Activated CD8-positive, alpha-beta T cell treated with anti-CD3 and anti-CD28 coated beads, Interleukin-2, amount 10 ng/mL, durations not matched to agents 7 days and 5 days (primary cell): ENCODE measurements at regions of chr3 and their contacts with region 1.

Region 1: GRCh38 chr3:43162230-43163084 is 56.6 kb upstream of the POMGNT2 start:
- DNase-seq: peak; percentile 79
- ATAC-seq: peak; percentile 93
- H3K4me3 Mint-ChIP-seq: peak overlapping the region; percentile 72
- H3K27ac Mint-ChIP-seq: peak overlapping the region; percentile 99
- H3K4me1 Mint-ChIP-seq: peaks cover 29% of the 10 kb centered on the region
- H3K27me3 Mint-ChIP-seq: no peaks in the 10 kb centered on the region

Region 2: GRCh38 chr3:42961633-42962032 is 200.8 kb before region 1 on chr3:
- CTCF ChIA-PET with region 1: interaction called, 53 read pairs
- POLR2A ChIA-PET with region 1: no interaction called
- DNase-seq: peak; percentile 40
- ATAC-seq: no peak
- H3K4me3 Mint-ChIP-seq: no peak overlapping the region
- H3K27ac Mint-ChIP-seq: no peak overlapping the region
- H3K4me1 Mint-ChIP-seq: peaks cover 2% of the 10 kb centered on the region
- H3K27me3 Mint-ChIP-seq: peaks cover 6% of the 10 kb centered on the region

Region 3: GRCh38 chr3:43142472-43142871 is 20.0 kb before region 1 on chr3:
- CTCF ChIA-PET with region 1: no interaction called
- POLR2A ChIA-PET with region 1: no interaction called
- DNase-seq: no peak
- ATAC-seq: no peak
- H3K4me3 Mint-ChIP-seq: no peak overlapping the region
- H3K27ac Mint-ChIP-seq: no peak overlapping the region
- H3K4me1 Mint-ChIP-seq: peaks cover 5% of the 10 kb centered on the region
- H3K27me3 Mint-ChIP-seq: no peaks in the 10 kb centered on the region

Region 4: DNA sequence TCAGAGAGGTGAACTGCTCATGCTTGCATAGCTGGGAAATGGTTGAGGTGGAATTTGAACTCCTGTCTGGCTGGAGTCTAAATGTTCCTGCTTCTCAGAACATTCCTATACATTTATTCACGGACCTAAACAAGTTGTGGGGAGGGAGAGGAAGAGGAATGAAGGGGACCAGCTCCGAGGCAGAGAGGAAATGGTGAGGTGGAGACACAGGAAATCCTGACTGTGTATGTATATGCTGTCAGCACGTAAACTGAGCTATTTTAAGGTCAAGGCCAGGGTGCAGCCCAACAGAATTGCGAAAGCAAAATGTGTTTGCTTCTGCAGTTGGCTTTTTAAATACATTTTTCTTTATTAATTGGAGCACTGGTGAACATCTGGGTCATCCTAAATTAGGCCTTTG is 17.6 kb after region 1 on chr3:
- CTCF ChIA-PET with region 1: interaction called, 37 read pairs
- POLR2A ChIA-PET with region 1: interaction called, 17 read pairs
- DNase-seq: peak; percentile 73
- ATAC-seq: peak; percentile 95
- H3K4me3 Mint-ChIP-seq: peak overlapping the region; percentile 64
- H3K27ac Mint-ChIP-seq: peak overlapping the region; percentile 93
- H3K4me1 Mint-ChIP-seq: peaks cover 46% of the 10 kb centered on the region
- H3K27me3 Mint-ChIP-seq: no peaks in the 10 kb centered on the region

Region 5: GRCh38 chr3:43223670-43224364 is 61.4 kb after region 1 on chr3:
- CTCF ChIA-PET with region 1: interaction called, 36 read pairs
- POLR2A ChIA-PET with region 1: no interaction called
- DNase-seq: no peak
- ATAC-seq: no peak
- H3K4me3 Mint-ChIP-seq: no peak overlapping the region
- H3K27ac Mint-ChIP-seq: no peak overlapping the region
- H3K4me1 Mint-ChIP-seq: peaks cover 33% of the 10 kb centered on the region
- H3K27me3 Mint-ChIP-seq: no peaks in the 10 kb centered on the region

Region 6: GRCh38 chr3:43286115-43286840 is 123.8 kb after region 1 on chr3 and contains the start of gene SNRK:
- CTCF ChIA-PET with region 1: interaction called, 30 read pairs
- POLR2A ChIA-PET with region 1: interaction called, 11 read pairs
- DNase-seq: peak; percentile 91
- ATAC-seq: peak; percentile 77
- H3K4me3 Mint-ChIP-seq: peak within 1 kb of the TSS; percentile 92
- H3K27ac Mint-ChIP-seq: peak within 1 kb of the TSS; percentile 98
- H3K4me1 Mint-ChIP-seq: peaks cover 33% of the 10 kb centered on the region
- H3K27me3 Mint-ChIP-seq: peaks cover 5% of the 10 kb centered on the region
- total RNA-seq, gene SNRK: 55.5 to 55.7 TPM

Region 7: DNA sequence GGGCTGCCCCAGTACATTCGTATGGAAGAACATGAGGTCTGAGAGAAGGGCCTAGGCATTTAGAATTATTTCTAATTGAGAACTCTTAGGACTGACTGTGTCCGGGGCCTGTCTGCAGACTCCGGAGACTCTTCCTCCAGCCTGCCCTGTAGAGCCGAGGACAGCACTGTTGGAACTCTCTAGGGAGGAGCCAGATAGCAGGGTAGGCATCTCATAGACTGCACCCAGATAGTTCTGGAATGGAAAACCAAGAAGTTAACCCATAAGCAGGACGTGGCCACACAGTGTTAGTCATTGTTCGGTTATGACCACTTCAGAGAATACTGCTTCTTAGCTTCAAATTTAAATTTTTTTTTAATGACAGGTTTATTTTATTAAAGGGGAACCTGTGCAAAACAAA is 183.4 kb after region 1 on chr3:
- CTCF ChIA-PET with region 1: interaction called, 28 read pairs
- POLR2A ChIA-PET with region 1: interaction called, 6 read pairs
- DNase-seq: peak; percentile 55
- ATAC-seq: peak; percentile 56
- H3K4me3 Mint-ChIP-seq: peak overlapping the region; percentile 43
- H3K27ac Mint-ChIP-seq: peak overlapping the region; percentile 97
- H3K4me1 Mint-ChIP-seq: peaks cover 77% of the 10 kb centered on the region
- H3K27me3 Mint-ChIP-seq: no peaks in the 10 kb centered on the region

Region 8: GRCh38 chr3:43389388-43390254 is 227.2 kb after region 1 on chr3:
- CTCF ChIA-PET with region 1: interaction called, 20 read pairs
- POLR2A ChIA-PET with region 1: no interaction called
- DNase-seq: peak; percentile 87
- ATAC-seq: peak; percentile 91
- H3K4me3 Mint-ChIP-seq: peak overlapping the region; percentile 22
- H3K27ac Mint-ChIP-seq: peak overlapping the region; percentile 89
- H3K4me1 Mint-ChIP-seq: peaks cover 53% of the 10 kb centered on the region
- H3K27me3 Mint-ChIP-seq: no peaks in the 10 kb centered on the region